Activated CD8-positive, alpha-beta T cell treated with anti-CD3 and anti-CD28 coated beads for 36 hours (primary cell): ENCODE measurements at regions of chr7 and their contacts with region 1.

Region 1: DNA sequence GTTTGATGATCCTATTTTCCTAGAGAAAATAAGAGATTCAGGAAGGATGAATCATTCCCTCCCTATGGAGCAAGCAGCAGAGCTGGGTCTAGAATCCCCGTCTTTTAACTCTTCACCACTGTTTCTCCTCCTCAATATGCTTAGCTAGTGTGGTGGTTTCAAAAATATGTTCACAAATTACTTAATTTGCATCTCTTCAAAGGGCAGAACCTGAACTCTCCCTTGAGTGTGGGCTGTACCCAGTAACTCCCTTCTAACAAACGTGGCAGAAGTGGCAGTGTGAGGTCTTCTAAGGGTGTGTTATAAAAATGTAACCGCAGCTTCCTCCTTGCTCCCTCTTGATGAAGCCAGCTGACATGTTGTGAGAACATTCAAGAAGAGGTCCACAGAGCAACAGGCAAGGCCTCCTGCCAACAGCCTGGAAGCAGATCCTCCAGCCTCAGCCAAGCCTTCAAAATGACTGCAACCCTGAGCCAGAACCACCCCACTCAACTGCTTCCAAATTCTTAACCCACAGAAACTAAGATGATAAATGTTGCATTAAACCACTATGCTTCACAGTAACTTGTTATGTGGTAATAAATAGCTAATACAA is 36.6 kb downstream of the SRPK2 start:
- DNase-seq: peak; percentile 74
- ATAC-seq: peak; percentile 92
- H3K4me3 Mint-ChIP-seq: peak overlapping the region; percentile 26
- H3K27ac Mint-ChIP-seq: peak overlapping the region; percentile 93
- H3K4me1 Mint-ChIP-seq: peaks cover 56% of the 10 kb centered on the region
- H3K27me3 Mint-ChIP-seq: no peaks in the 10 kb centered on the region
- CTCF ChIP-seq: no peak

Region 2: DNA sequence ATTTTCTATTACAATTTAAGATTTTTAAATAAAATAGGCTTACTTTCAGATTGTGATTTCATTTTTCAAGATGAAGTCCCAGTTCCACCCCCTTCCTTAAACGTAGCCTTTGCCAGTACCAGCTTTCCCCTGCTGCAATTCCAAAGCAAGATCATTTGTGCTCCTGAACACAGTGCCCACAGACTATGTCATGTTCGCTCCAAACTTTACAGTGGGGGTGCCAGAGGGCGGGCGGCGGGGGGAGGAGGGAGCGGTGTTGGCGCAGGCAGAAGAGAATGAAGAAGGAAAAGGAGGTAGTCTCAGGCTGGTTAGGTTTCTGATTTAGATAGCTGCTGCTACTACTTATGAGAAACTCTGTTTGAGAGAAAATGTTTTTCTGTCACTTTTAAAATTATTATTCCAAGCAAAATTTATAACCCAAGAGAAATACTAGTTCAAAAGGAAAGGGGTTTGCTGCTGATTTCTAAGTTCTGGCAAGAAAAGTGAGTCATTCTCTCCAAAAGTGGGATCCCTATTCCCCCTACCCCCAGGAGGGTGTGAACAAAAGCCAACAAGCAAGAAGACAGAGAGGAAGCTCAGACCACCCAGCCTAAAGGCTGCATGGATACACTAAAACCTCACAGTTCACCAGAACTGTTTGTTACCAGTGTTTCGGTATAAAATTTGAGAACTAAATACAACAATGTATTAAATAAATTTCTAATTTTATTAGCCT is 73.0 kb before region 1 on chr7:
- CTCF ChIA-PET with region 1: no interaction called
- POLR2A ChIA-PET with region 1: no interaction called
- intact Hi-C with region 1: no loop called
- DNase-seq: no peak
- ATAC-seq: peak; percentile 42
- H3K4me3 Mint-ChIP-seq: no peak overlapping the region
- H3K27ac Mint-ChIP-seq: no peak overlapping the region
- H3K4me1 Mint-ChIP-seq: peaks cover 28% of the 10 kb centered on the region
- H3K27me3 Mint-ChIP-seq: no peaks in the 10 kb centered on the region
- CTCF ChIP-seq: no peak

Region 3: DNA sequence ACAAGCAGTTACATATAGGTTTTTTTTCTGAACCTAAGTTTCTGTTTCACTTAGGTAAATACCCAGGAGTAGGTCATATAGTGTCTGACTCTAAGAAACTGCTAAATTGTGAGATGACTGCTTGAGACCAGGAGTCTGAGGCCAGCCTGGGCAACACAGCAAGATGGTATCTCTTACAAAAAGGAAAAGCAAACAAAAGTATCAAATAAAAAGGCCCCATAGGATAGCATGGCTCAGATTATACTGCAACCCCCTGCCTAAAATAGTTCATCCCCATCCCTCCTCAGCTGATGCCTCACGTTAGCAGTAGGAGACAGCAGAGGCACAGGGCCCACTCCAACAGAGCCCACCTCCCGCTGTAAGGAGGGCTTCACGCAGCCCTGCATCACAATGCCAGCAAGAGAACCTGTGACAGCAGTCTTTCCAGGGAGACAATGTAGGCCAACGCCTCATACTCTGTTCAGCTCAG is 53.6 kb before region 1 on chr7:
- CTCF ChIA-PET with region 1: no interaction called
- POLR2A ChIA-PET with region 1: no interaction called
- intact Hi-C with region 1: loop called (anchors 5 kb)
- DNase-seq: peak; percentile 64
- ATAC-seq: peak; percentile 88
- H3K4me3 Mint-ChIP-seq: peak overlapping the region; percentile 55
- H3K27ac Mint-ChIP-seq: peak overlapping the region; percentile 84
- H3K4me1 Mint-ChIP-seq: peaks cover 50% of the 10 kb centered on the region
- H3K27me3 Mint-ChIP-seq: no peaks in the 10 kb centered on the region
- CTCF ChIP-seq: no peak

Region 4: GRCh38 chr7:105524840-105525239 is 172.7 kb after region 1 on chr7:
- CTCF ChIA-PET with region 1: no interaction called
- POLR2A ChIA-PET with region 1: no interaction called
- intact Hi-C with region 1: no loop called
- DNase-seq: no peak
- ATAC-seq: no peak
- H3K4me3 Mint-ChIP-seq: no peak overlapping the region
- H3K27ac Mint-ChIP-seq: no peak overlapping the region
- H3K4me1 Mint-ChIP-seq: peaks cover 10% of the 10 kb centered on the region
- H3K27me3 Mint-ChIP-seq: no peaks in the 10 kb centered on the region
- CTCF ChIP-seq: no peak

Region 5: GRCh38 chr7:105623378-105623777 is 271.3 kb after region 1 on chr7:
- CTCF ChIA-PET with region 1: no interaction called
- POLR2A ChIA-PET with region 1: no interaction called
- intact Hi-C with region 1: no loop called
- DNase-seq: no peak
- ATAC-seq: no peak
- H3K4me3 Mint-ChIP-seq: no peak overlapping the region
- H3K27ac Mint-ChIP-seq: no peak overlapping the region
- H3K4me1 Mint-ChIP-seq: no peaks in the 10 kb centered on the region
- H3K27me3 Mint-ChIP-seq: no peaks in the 10 kb centered on the region
- CTCF ChIP-seq: no peak